ENCODE measurements at regions of chr9 and their contacts with region 1.

Region 1: DNA sequence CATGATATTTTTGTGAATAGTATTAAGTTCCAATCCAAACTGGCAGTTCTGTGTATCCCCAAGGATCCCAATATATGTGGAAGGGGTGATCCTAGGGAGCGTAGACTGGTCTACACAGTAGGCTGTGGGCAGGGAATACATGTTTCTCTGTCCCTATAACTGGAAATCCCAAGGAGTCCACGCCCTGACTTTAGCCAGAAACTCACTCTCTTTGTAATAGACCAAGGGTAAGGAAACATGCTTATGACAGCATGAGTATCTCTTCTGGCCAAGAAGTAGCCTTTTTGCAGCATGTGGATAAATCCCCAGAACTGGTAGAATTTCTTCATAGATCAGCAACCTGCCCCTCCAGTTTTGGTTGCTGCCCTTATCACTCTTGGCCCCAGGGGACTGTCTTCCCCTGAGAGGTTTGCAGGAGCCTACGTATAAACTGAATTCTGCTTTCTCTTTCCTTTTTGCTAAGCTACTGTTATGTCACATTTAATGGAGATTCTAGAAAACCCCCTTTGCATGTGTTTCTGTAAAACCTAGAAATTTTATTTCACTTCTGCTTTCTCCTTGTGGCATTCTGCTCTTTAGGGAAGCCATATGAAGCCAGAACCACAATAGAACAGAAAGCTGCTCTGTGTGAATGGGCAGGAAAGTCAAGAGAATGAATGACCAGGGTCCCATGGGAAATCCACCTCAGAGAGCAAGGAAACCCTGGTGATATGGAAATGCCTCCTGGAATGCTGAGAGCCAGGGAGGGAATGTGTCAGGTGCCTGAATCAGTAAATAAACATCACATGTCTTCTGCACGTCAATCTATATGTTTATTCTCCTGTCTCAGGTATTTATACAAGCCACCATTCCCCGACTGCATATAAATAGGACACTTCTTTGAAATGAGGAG is 3.5 kb downstream of the IFNA2 start:
- DNase-seq: peak; percentile 54
- ATAC-seq: peak; percentile 99
- H3K4me3 Mint-ChIP-seq: no peak overlapping the region
- H3K27ac Mint-ChIP-seq: peak overlapping the region; percentile 41
- H3K4me1 Mint-ChIP-seq: peaks cover 25% of the 10 kb centered on the region
- H3K27me3 Mint-ChIP-seq: peaks cover 16% of the 10 kb centered on the region
- CTCF ChIP-seq: no peak

Region 2: GRCh38 chr9:21334701-21335632 is 46.7 kb before region 1 on chr9 and contains the start of gene KLHL9:
- CTCF ChIA-PET with region 1: no interaction called
- POLR2A ChIA-PET with region 1: interaction called, 8 read pairs
- intact Hi-C with region 1: loop called (anchors 1 kb)
- DNase-seq: peak; percentile 76
- ATAC-seq: peak; percentile 88
- H3K4me3 Mint-ChIP-seq: peak within 1 kb of the TSS; percentile 91
- H3K27ac Mint-ChIP-seq: peak within 1 kb of the TSS; percentile 87
- H3K4me1 Mint-ChIP-seq: peaks cover 50% of the 10 kb centered on the region
- H3K27me3 Mint-ChIP-seq: peaks cover 7% of the 10 kb centered on the region
- CTCF ChIP-seq: no peak
- total RNA-seq, gene KLHL9: 13.1 and 13.8 TPM in 2 replicates

Region 3: GRCh38 chr9:21395778-21396717 is 14.4 kb after region 1 on chr9:
- CTCF ChIA-PET with region 1: interaction called, 10 read pairs
- POLR2A ChIA-PET with region 1: interaction called, 3 read pairs
- intact Hi-C with region 1: loop called (anchors 1 kb)
- DNase-seq: peak; percentile 47
- ATAC-seq: peak; percentile 65
- H3K4me3 Mint-ChIP-seq: peak overlapping the region; percentile 66
- H3K27ac Mint-ChIP-seq: no peak overlapping the region
- H3K4me1 Mint-ChIP-seq: peaks cover 12% of the 10 kb centered on the region
- H3K27me3 Mint-ChIP-seq: peaks cover 57% of the 10 kb centered on the region
- CTCF ChIP-seq: no peak

Region 4: GRCh38 chr9:21434202-21435014 is 52.7 kb after region 1 on chr9:
- CTCF ChIA-PET with region 1: interaction called, 3 read pairs
- POLR2A ChIA-PET with region 1: no interaction called
- intact Hi-C with region 1: loop called (anchors 1 kb)
- DNase-seq: no peak
- ATAC-seq: no peak
- H3K4me3 Mint-ChIP-seq: no peak overlapping the region
- H3K27ac Mint-ChIP-seq: no peak overlapping the region
- H3K4me1 Mint-ChIP-seq: peaks cover 10% of the 10 kb centered on the region
- H3K27me3 Mint-ChIP-seq: peaks cover 44% of the 10 kb centered on the region
- CTCF ChIP-seq: peak; percentile 29

Region 5: DNA sequence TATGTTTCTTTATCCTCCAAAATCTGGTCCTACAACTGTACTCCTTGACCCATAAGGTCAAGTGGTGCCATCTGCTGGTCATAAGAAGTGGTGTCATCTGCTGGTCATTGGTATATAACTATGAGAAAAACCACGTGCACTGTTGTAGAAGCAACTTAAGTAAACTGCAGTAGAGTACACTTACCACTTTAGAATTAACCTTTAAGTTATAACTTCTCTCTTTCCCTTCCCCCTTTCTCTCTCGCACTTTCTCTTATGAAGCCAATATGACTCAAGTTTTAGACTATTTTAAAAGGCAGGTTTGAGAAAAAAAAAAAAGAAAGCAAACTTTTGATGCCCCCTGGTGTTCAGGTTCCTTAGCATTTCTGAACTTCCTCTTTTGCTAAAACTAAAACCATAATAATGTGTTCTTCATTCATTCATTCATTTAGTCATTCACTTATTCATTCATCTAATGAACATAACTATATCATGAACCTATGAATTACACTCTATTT is 407.9 kb after region 1 on chr9:
- CTCF ChIA-PET with region 1: interaction called, 3 read pairs
- POLR2A ChIA-PET with region 1: no interaction called
- intact Hi-C with region 1: loop called (anchors 1 kb)
- DNase-seq: no peak
- ATAC-seq: peak; percentile 98
- H3K4me3 Mint-ChIP-seq: peak overlapping the region; percentile 80
- H3K27ac Mint-ChIP-seq: peak overlapping the region; percentile 76
- H3K4me1 Mint-ChIP-seq: peaks cover 7% of the 10 kb centered on the region
- H3K27me3 Mint-ChIP-seq: peaks cover 17% of the 10 kb centered on the region
- CTCF ChIP-seq: peak; percentile 85

Region 6: GRCh38 chr9:21995177-21996086 is 613.7 kb after region 1 on chr9:
- CTCF ChIA-PET with region 1: no interaction called
- POLR2A ChIA-PET with region 1: no interaction called
- intact Hi-C with region 1: loop called (anchors 5 kb)
- DNase-seq: peak; percentile 82
- ATAC-seq: peak; percentile 84
- H3K4me3 Mint-ChIP-seq: peak overlapping the region; percentile 98
- H3K27ac Mint-ChIP-seq: peak overlapping the region; percentile 97
- H3K4me1 Mint-ChIP-seq: peaks cover 24% of the 10 kb centered on the region
- H3K27me3 Mint-ChIP-seq: no peaks in the 10 kb centered on the region
- CTCF ChIP-seq: no peak

Measured in activated B cell treated with CpG ODN at 0.5 μM for 24 hours (primary cell).